ENCODE measurements at regions of chr3 and their contacts with region 1.

Region 1: GRCh38 chr3:113287803-113288648 is 76.7 kb downstream of the BOC start:
- DNase-seq: no peak
- ATAC-seq: peak in 1 of 2 donors; percentile 59
- H3K4me3 ChIP-seq: no peak overlapping the region
- H3K27ac ChIP-seq: no peak overlapping the region
- H3K4me1 ChIP-seq: no peaks in the 10 kb centered on the region
- H3K27me3 ChIP-seq: no peaks in the 10 kb centered on the region
- CTCF ChIP-seq: peak; percentile 93 to 99 (median 96)
- POLR2A ChIP-seq: no peak

Region 2: DNA sequence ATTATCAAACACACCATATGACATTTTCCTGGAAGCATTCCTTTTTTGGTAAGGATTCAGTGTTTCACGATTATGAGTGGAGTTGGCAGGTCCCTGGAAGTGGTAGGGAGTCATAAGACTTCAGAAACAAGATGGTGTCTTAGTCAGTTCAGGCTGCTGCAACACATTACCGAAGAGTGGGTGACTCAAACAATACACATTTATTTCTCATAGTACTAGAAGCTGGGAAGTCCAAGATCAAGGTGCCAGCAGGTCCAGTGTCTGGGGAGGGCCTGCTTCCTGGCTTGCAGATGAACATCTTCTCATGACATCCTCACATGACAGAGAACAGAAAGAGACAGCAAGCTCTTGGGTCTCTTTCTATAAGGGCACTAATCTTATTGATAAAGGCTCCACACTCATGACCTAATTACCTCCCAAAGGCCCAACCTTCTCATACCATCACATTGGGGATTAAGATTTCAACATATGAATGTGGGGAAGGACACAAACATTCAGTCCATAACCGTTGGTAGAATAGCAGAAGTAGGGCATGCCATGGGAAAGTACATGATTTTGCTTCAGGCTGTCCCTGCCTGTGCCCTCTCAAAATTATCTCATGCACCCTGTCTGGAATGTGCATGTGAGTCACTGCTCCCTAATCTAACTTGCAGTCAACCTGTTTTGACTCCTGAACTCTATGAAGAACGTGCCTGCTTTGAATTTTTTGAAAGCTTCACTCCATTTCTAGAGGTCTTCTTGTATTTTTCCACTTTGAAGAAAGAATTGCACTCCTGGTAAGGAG is 224.7 kb before region 1 on chr3:
- in situ Hi-C with region 1: loop called in 1 of 4 experiments (anchors 10 kb)
- intact Hi-C with region 1: no loop called
- DNase-seq: no peak
- ATAC-seq: no peak
- H3K4me3 ChIP-seq: no peak overlapping the region
- H3K27ac ChIP-seq: no peak overlapping the region
- H3K4me1 ChIP-seq: no peaks in the 10 kb centered on the region
- H3K27me3 ChIP-seq: no peaks in the 10 kb centered on the region
- CTCF ChIP-seq: no peak
- POLR2A ChIP-seq: no peak

Region 3: GRCh38 chr3:113136071-113136470 is 152.0 kb before region 1 on chr3:
- in situ Hi-C with region 1: loop called (anchors 5 to 10 kb)
- intact Hi-C with region 1: loop called (anchors 1 kb)
- DNase-seq: no peak
- ATAC-seq: no peak
- H3K4me3 ChIP-seq: no peak overlapping the region
- H3K27ac ChIP-seq: no peak overlapping the region
- H3K4me1 ChIP-seq: no peaks in the 10 kb centered on the region
- H3K27me3 ChIP-seq: no peaks in the 10 kb centered on the region
- CTCF ChIP-seq: peak; percentile 25 to 50 (median 39)
- POLR2A ChIP-seq: no peak

Measured in gastrocnemius medialis (tissue), 4 donors.